ENCODE measurements at regions of chr14 and their contacts with region 1.

Region 1: DNA sequence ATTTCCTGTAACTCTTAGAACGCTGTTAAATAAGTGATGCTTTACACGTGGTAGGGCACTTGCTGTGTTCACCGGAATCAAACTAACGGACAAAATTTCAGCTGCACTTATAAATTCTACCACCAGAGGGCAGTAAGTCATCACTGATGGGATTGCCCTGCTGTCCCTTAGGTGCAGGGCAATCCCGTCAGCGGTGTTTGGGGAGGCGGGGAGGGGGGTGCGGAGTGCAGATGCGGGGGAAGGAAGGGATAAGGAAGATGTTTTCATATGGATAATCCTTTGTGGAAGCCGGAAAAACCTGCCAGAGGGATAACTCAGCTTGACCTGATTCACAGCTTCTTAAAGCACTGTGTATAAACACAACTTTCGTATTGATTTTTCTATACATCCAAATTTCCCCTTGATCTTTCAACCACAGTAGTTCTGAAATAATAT is 21.7 kb upstream of the SLC10A1 start:
- DNase-seq: peak; percentile 53 to 83
- H3K4me3 ChIP-seq: no peak overlapping the region
- CTCF ChIP-seq: peak in 1 of 3 donors; percentile 44
- POLR2A ChIP-seq: no peak

Region 2: GRCh38 chr14:69803753-69804152 is 15.0 kb before region 1 on chr14:
- intact Hi-C with region 1: no loop called
- DNase-seq: no peak
- H3K4me3 ChIP-seq: no peak overlapping the region
- CTCF ChIP-seq: no peak
- POLR2A ChIP-seq: no peak

Region 3: DNA sequence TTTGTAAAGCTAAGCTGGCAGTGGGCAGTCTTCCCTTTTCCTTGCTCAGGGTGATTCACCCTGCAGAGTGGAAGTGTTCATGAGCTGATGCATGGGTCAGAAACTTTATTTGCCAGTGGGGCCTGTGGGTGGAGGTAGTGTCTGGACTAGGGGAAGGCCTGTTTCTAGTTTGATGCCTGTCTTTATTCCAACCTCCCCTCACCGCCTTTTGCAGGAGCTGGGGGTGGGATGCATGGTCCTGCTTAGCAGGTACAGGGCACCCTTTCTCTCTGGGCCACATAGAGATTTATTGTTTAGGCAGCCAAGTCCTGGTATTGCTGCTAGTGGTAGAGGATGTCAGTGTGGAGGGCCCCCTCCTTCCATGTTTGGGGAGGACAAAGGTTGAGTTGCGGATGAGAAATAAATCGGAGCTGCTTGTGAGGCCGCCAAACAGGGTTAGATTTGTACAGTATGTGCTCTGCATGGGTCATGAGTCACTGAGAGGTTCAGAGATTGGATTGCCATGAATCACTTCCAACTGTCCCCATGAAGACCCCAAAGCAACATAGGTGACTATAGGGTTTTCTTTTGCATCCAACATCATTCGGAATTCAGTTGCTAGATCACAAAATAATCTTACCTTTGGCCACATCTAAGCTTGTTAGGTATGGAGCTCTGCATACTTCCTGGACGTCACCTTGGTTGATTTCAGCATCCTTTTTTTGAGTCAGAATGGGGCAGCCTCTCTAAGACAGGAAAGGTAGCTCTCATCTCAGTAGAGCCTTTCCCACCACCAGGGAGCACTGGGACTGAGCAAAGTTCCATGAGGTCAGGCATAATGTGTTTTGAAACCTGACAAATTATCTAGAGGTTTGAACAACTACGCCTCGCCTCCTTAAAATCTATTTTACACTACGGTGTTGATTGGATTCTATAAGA is 69.2 kb after region 1 on chr14:
- intact Hi-C with region 1: no loop called
- DNase-seq: no peak
- H3K4me3 ChIP-seq: no peak overlapping the region
- CTCF ChIP-seq: no peak
- POLR2A ChIP-seq: no peak

Region 4: DNA sequence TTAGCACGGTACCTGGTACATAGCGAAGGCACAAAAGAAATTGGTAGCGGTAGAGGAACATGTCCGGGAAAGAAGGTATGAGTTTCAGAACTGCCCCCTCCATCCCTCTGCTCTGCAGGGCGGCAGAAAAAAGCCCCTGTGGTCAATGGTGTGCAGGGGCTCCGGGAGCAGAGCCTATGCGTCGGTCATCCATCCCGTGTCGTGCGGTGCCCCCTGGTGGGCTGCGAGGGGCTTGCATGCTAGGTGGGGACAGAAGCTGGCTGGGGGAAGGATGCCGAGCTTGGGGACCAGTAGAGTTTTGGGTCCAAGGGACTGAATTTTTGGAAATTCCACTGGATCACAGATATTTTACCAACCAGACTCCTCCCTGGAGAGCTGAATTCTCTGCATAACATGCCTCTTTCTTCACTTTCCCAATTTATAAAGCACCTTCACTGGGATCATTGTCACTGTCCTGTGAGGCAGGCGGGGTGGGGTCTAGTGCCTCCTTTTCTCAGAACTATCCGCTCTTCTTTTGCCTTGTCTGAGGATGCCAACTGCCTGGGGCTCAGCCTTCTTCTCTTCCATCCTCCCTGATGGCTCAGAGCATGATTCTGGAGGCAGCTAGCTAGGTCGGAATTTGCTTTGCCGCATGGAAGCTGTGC is 209.1 kb after region 1 on chr14:
- intact Hi-C with region 1: loop called (anchors 5 kb)
- DNase-seq: peak; percentile 33 to 91
- H3K4me3 ChIP-seq: no peak overlapping the region
- CTCF ChIP-seq: peak in 1 of 3 donors; percentile 47
- POLR2A ChIP-seq: no peak

Region 5: DNA sequence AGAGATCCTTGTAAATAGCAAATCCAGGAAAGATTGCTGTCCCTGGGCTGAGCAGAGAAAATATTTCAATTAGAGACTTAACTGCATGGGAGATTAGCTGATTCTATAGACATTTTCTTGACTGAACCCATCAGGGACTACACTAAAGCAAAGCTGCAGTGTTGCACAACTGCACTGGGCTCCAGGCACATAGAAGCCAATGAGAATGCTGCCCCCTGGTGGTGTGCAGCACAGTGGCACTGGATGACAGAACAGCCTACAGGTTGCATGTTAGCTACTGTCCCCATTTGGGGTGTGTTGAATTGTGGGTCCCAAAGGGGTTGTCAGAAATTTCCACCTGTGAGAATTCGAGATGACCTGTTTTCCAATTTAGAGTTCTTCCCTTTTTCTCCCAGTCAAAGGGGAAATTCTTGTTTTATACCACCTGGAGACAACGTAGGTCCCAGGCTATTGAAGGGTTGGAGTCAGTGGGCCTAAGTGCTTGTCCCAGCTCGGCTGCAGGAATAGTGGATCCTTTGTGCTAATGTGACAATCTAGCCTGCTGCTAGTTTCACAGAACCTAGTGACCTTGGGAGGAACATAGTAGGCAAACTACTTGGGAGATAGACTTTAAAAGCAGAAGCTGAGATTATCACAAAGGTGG is 255.3 kb after region 1 on chr14:
- intact Hi-C with region 1: loop called (anchors 2 kb)
- DNase-seq: no peak
- H3K4me3 ChIP-seq: no peak overlapping the region
- CTCF ChIP-seq: no peak
- POLR2A ChIP-seq: no peak